Calu3 (cell line): ENCODE measurements at regions of chrX and their contacts with region 1.

Region 1: GRCh38 chrX:152821145-152821765 is 9.3 kb downstream of the CETN2 start:
- DNase-seq: peak; percentile 69
- H3K4me3 Mint-ChIP-seq: no peak overlapping the region
- H3K27ac Mint-ChIP-seq: no peak overlapping the region
- H3K4me1 Mint-ChIP-seq: no peaks in the 10 kb centered on the region
- H3K27me3 Mint-ChIP-seq: peaks cover 6% of the 10 kb centered on the region
- CTCF ChIP-seq: peak; percentile 61

Region 2: GRCh38 chrX:151713859-151714258 is 1107.4 kb before region 1 on chrX:
- CTCF ChIA-PET with region 1: no interaction called
- intact Hi-C with region 1: loop called (anchors 5 kb)
- DNase-seq: peak; percentile 62
- H3K4me3 Mint-ChIP-seq: no peak overlapping the region
- H3K27ac Mint-ChIP-seq: no peak overlapping the region
- H3K4me1 Mint-ChIP-seq: no peaks in the 10 kb centered on the region
- H3K27me3 Mint-ChIP-seq: peaks cover 34% of the 10 kb centered on the region
- CTCF ChIP-seq: peak; percentile 56

Region 3: DNA sequence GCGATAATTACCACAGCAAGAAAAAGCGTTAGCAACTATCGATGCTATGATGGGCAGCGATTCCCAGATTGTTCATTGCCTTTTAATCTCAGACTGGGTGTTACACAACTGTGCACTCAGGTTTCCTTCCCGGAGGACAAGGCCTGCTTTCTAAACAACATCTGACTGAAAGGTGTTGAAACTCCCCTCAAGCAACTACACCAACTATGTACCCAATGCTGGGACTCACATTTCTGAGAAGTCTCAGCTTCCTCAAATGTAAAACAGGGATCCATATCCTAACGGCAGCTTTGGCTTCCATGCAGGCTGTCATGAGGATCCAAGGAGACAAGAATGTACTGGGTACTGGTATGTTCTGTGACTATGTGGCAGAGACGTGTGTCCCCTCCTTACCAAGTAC is 855.0 kb before region 1 on chrX:
- CTCF ChIA-PET with region 1: no interaction called
- intact Hi-C with region 1: loop called (anchors 10 kb)
- DNase-seq: no peak
- H3K4me3 Mint-ChIP-seq: no peak overlapping the region
- H3K27ac Mint-ChIP-seq: no peak overlapping the region
- H3K4me1 Mint-ChIP-seq: peaks cover 16% of the 10 kb centered on the region
- H3K27me3 Mint-ChIP-seq: no peaks in the 10 kb centered on the region
- CTCF ChIP-seq: no peak

Region 4: DNA sequence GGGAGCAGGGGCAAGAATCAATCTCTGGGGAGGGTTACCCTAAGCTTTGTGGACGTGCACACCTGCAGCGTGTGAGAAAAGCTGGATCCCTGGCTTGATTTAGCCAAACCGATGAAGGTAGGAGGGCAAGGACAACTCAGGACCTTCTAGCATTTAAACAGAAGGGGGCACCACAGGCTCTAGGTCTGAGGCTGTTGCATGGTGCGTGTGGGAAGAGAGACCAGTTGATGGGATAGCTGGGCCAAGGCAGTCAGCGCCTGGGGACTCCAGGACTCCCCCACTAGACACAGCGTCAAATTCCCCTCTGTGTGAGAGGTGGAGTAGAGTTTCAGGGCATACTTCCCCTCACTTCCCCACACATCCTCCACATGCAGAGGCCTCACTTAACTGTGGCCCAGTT is 179.3 kb before region 1 on chrX:
- CTCF ChIA-PET with region 1: interaction called, 12 read pairs
- intact Hi-C with region 1: loop called (anchors 2 kb)
- DNase-seq: peak; percentile 21
- H3K4me3 Mint-ChIP-seq: no peak overlapping the region
- H3K27ac Mint-ChIP-seq: no peak overlapping the region
- H3K4me1 Mint-ChIP-seq: no peaks in the 10 kb centered on the region
- H3K27me3 Mint-ChIP-seq: peaks cover 29% of the 10 kb centered on the region
- CTCF ChIP-seq: no peak

Region 5: DNA sequence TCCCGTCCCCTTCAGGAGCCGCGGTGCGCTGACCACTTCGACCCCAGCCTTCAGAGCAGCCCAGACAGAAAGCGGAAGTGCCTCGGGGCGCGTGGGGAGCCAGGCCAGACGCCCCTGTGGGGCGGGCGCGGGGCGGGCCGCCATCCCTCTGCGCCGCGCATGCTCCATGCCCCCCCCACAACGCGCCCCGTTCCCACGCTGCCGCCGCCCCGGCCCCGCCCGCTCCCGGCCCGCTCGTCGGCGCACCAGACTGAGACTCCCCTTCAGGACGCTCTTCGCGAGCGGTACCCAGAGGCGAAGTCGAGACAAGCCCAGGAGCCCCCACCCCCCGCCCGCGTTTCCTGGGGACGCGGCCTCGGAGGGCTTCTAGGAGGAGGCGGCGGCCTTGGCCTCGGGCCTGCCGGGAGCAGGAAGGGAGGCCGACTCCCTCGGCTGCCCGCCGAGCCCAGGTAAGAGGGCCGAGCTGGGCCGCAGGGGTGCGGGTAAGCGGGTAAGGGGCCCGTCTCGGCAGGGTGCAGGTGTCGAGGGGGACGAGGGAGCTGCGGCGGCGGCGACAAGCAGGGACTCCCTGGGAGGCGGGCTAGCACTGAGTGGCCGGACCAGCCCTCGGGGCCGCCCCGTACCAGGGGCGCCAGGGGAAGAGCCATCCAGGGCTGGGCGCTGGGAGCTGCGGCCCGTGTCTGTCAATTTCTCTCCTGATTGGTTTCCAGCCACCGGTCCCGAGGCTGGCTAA is 590.2 kb after region 1 on chrX and contains the start of gene ZFP92:
- CTCF ChIA-PET with region 1: no interaction called
- intact Hi-C with region 1: no loop called
- DNase-seq: no peak
- H3K4me3 Mint-ChIP-seq: peak within 1 kb of the TSS; percentile 16
- H3K27ac Mint-ChIP-seq: no peak within 1 kb of the TSS
- H3K4me1 Mint-ChIP-seq: no peaks in the 10 kb centered on the region
- H3K27me3 Mint-ChIP-seq: peaks cover 92% of the 10 kb centered on the region
- CTCF ChIP-seq: no peak
- total RNA-seq, gene ZFP92: 0.19 and 0.22 TPM in 2 replicates